ENCODE measurements at regions of chr12 and their contacts with region 1.

Region 1: DNA sequence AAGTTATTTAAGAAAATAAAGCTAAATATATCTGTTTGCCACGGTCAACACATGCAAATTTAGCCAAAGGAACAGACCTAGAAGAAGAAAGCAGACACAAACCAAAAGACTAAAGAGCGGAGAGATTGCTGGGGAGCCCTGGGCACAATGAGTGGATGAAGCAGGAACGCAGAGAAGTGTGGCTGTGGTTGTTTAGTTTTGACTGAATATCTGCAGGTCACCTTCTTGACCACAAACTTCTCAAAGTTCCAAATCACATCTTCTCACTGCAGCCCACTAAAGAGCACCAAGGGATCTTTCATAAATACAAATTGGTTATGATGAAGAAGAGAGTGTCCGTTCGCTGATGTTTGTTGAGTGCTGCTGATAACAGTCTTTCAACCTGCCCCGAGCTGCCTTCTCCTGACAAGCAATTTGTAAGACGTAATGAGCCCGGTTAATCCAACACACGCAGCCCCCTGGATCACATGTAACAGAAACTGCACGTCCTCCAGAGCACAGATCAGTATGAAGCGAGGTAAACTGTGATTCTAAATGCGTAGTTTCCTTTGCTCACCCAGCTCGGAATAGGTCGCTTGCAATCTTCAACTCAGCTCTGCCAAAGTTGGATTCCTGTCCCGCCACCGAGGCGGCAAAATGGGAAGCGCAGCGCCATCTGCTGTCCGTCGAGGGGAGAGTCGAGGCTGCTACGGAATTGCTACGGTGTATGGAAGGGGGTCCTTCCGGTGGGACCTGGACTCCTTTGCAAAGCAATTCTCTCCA is 120.8 kb downstream of the GXYLT1 start:
- DNase-seq: peak; percentile 83 to 92
- ATAC-seq: peak; percentile 94
- H3K4me3 ChIP-seq: peak overlapping the region; percentile 66 to 99
- H3K27ac ChIP-seq: no peak overlapping the region
- H3K4me1 ChIP-seq: peaks cover 0 to 1% of the 10 kb centered on the region in 2 donors
- H3K27me3 ChIP-seq: no peaks in the 10 kb centered on the region

Region 2: GRCh38 chr12:40946612-40947194 is 1077.2 kb before region 1 on chr12:
- intact Hi-C with region 1: loop called (anchors 5 kb)
- DNase-seq: no peak
- ATAC-seq: no peak
- H3K4me3 ChIP-seq: no peak overlapping the region
- H3K27ac ChIP-seq: no peak overlapping the region
- H3K4me1 ChIP-seq: no peaks in the 10 kb centered on the region
- H3K27me3 ChIP-seq: no peaks in the 10 kb centered on the region

Region 3: DNA sequence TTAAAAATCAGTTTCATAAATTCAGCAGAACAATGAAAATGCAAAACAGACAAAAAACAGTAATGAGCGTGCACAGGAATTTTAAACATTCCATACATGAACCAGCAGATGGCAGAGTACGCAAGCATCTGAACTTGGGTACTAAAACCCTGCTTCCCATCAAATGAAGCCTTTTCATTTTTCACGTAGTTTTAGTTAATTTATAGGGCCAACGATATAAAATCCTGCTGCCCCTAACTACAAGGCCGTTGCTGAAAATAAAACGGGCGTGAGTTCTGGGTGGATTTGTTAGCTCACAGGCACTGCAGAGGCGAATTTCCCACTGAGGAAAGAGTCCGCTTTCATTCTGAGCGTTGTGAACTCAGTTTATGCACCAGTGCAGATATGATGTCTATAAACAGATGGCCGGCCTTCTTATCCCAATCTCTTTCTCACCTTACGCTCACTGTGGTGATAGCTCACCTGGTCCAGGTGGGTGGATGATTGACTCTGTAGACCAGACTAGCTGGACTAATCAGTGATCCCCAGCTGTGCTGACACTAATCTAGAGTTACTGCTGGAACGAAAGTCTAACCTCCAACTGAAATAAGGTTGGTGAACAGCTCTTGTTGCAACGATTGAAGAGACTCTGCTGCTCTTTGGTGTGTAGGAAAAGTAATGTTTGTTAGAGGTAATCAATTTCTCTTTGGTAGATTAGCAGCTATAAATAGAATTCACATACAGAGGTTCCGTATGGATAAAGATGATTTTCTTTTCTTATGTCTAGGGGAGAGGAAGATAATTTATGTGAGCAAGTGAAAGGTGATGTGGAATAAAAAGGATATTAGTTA is 746.6 kb before region 1 on chr12:
- intact Hi-C with region 1: loop called (anchors 5 kb)
- DNase-seq: no peak
- ATAC-seq: no peak
- H3K4me3 ChIP-seq: no peak overlapping the region
- H3K27ac ChIP-seq: no peak overlapping the region
- H3K4me1 ChIP-seq: no peaks in the 10 kb centered on the region
- H3K27me3 ChIP-seq: no peaks in the 10 kb centered on the region

Region 4: DNA sequence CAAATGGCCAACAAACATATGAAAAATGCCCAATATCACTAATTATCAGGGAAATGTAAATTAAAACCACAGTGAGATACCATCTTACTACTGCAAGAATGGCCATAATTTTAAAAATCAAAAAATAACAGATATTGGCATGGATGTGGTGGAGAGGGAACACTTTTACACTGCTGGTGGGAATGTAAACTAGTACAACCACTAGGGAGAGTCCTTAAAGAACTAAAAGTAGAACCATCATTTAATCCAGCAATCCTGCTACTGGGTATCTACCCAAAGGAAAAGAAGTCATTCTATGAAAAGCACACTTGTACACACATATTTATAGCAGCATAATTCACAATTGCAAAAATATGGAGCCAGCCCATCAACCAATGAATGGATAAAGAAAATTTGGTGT is 338.9 kb before region 1 on chr12:
- intact Hi-C with region 1: loop called in 1 of 2 experiments (anchors 10 kb)
- DNase-seq: no peak
- ATAC-seq: no peak
- H3K4me3 ChIP-seq: no peak overlapping the region
- H3K27ac ChIP-seq: no peak overlapping the region
- H3K4me1 ChIP-seq: no peaks in the 10 kb centered on the region
- H3K27me3 ChIP-seq: no peaks in the 10 kb centered on the region